T-cell (primary cell): ENCODE measurements at regions of chr3 and their contacts with region 1.

Region 1: DNA sequence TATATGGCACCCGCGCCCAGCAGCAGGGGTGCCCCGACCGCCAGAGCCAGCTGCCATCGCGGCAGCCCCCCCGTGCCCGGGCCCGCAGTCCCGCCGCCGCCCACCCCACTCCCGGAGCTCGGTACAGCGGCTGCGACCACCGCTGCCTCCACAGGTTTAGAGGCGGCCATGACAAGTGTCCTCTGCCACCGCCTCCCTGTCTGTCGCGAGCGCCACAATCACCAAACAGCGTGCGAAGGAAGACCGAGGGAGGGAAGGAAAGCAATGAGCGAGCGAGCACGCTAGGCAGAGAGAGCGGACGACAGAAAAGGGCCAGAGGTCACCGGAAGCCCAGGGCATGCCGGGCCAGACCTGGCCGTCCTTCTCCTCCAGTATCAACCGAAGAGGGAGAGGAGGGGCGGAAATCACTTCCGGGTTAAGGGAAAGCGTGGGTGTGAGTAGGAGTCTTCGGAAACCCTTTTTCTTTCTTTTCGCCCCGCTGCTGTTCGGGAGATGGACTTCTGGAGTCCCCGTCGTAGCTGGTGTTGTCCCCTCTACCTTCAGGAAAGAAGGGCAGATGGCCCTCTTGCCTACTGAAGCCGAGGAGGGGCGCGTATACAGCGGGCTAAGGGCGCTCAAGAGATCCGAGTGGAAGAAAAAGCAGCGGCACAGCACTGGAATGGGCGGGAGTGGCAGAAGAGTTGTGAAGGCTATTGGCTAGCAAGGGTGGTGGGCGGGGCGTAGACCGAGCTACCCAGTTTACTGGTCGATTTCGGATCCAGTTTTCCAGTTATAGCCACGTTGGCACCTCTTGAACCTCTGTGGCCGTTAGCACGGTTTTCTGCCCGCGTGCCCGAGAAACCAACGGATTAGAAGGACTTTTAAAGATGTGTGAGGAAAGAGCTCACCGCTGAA is at the starts of genes LNP1 and TOMM70:
- DNase-seq: peak; percentile 84 to 96 (median 93)
- ATAC-seq: peak; percentile 88 to 93 (median 91)
- H3K4me3 ChIP-seq: peak within 1 kb of the TSS; percentile 77 to 99
- H3K4me3 Mint-ChIP-seq: peak within 1 kb of the TSS; percentile 93 to 98 (median 94)
- H3K27ac ChIP-seq: peak within 1 kb of the TSS; percentile 87
- H3K27ac Mint-ChIP-seq: peak within 1 kb of the TSS; percentile 93 to 96
- H3K4me1 ChIP-seq: peaks cover 20 to 28% of the 10 kb centered on the region in 2 experiments
- H3K4me1 Mint-ChIP-seq: peaks cover 70 to 81% (median 72%) of the 10 kb centered on the region in 3 donors
- H3K27me3 ChIP-seq: no peaks in the 10 kb centered on the region
- H3K27me3 Mint-ChIP-seq: no peaks in the 10 kb centered on the region
- total RNA-seq, gene LNP1: 0.88 to 1.7 (median 1.4) TPM
- total RNA-seq, gene TOMM70: 23.5 to 33.9 (median 33.6) TPM

Region 2: GRCh38 chr3:99330281-99330680 is 1070.7 kb before region 1 on chr3:
- CTCF ChIA-PET with region 1: no interaction called
- POLR2A ChIA-PET with region 1: no interaction called
- DNase-seq: no peak
- ATAC-seq: no peak
- H3K4me3 ChIP-seq: no peak overlapping the region
- H3K4me3 Mint-ChIP-seq: no peak overlapping the region
- H3K27ac ChIP-seq: no peak overlapping the region
- H3K27ac Mint-ChIP-seq: no peak overlapping the region
- H3K4me1 ChIP-seq: no peaks in the 10 kb centered on the region
- H3K4me1 Mint-ChIP-seq: no peaks in the 10 kb centered on the region
- H3K27me3 ChIP-seq: no peaks in the 10 kb centered on the region
- H3K27me3 Mint-ChIP-seq: no peaks in the 10 kb centered on the region

Region 3: GRCh38 chr3:100374521-100374920 is 26.5 kb before region 1 on chr3:
- CTCF ChIA-PET with region 1: no interaction called
- POLR2A ChIA-PET with region 1: no interaction called
- DNase-seq: no peak
- ATAC-seq: no peak
- H3K4me3 ChIP-seq: no peak overlapping the region
- H3K4me3 Mint-ChIP-seq: no peak overlapping the region
- H3K27ac ChIP-seq: no peak overlapping the region
- H3K27ac Mint-ChIP-seq: no peak overlapping the region
- H3K4me1 ChIP-seq: no peaks in the 10 kb centered on the region
- H3K4me1 Mint-ChIP-seq: peaks cover 0 to 5% (median 0%) of the 10 kb centered on the region in 3 donors
- H3K27me3 ChIP-seq: no peaks in the 10 kb centered on the region
- H3K27me3 Mint-ChIP-seq: no peaks in the 10 kb centered on the region

Region 4: GRCh38 chr3:100412912-100413590 is 12.0 kb after region 1 on chr3:
- CTCF ChIA-PET with region 1: interaction called in 1 of 2 experiments, 5 read pairs
- POLR2A ChIA-PET with region 1: interaction called in 1 of 2 experiments, 10 read pairs
- DNase-seq: no peak
- ATAC-seq: no peak
- H3K4me3 ChIP-seq: no peak overlapping the region
- H3K4me3 Mint-ChIP-seq: no peak overlapping the region
- H3K27ac ChIP-seq: no peak overlapping the region
- H3K27ac Mint-ChIP-seq: no peak overlapping the region
- H3K4me1 ChIP-seq: no peaks in the 10 kb centered on the region
- H3K4me1 Mint-ChIP-seq: no peaks in the 10 kb centered on the region
- H3K27me3 ChIP-seq: no peaks in the 10 kb centered on the region
- H3K27me3 Mint-ChIP-seq: no peaks in the 10 kb centered on the region

Region 5: GRCh38 chr3:100437721-100438622 is 36.9 kb after region 1 on chr3:
- CTCF ChIA-PET with region 1: no interaction called
- POLR2A ChIA-PET with region 1: no interaction called
- DNase-seq: no peak
- ATAC-seq: no peak
- H3K4me3 ChIP-seq: no peak overlapping the region
- H3K4me3 Mint-ChIP-seq: no peak overlapping the region
- H3K27ac ChIP-seq: no peak overlapping the region
- H3K27ac Mint-ChIP-seq: no peak overlapping the region
- H3K4me1 ChIP-seq: peaks cover 5 to 9% of the 10 kb centered on the region in 2 experiments
- H3K4me1 Mint-ChIP-seq: peaks cover 9% of the 10 kb centered on the region in 3 donors
- H3K27me3 ChIP-seq: no peaks in the 10 kb centered on the region
- H3K27me3 Mint-ChIP-seq: peaks cover 0 to 4% of the 10 kb centered on the region in 2 donors